ENCODE measurements at regions of chr19 and their contacts with region 1.

Region 1: GRCh38 chr19:50003810-50004419 is 21.3 kb downstream of the VRK3 start:
- DNase-seq: peak; percentile 14
- H3K4me3 Mint-ChIP-seq: peak overlapping the region; percentile 51
- H3K27ac Mint-ChIP-seq: peak overlapping the region; percentile 39
- H3K4me1 Mint-ChIP-seq: peaks cover 31% of the 10 kb centered on the region
- H3K27me3 Mint-ChIP-seq: no peaks in the 10 kb centered on the region

Region 2: DNA sequence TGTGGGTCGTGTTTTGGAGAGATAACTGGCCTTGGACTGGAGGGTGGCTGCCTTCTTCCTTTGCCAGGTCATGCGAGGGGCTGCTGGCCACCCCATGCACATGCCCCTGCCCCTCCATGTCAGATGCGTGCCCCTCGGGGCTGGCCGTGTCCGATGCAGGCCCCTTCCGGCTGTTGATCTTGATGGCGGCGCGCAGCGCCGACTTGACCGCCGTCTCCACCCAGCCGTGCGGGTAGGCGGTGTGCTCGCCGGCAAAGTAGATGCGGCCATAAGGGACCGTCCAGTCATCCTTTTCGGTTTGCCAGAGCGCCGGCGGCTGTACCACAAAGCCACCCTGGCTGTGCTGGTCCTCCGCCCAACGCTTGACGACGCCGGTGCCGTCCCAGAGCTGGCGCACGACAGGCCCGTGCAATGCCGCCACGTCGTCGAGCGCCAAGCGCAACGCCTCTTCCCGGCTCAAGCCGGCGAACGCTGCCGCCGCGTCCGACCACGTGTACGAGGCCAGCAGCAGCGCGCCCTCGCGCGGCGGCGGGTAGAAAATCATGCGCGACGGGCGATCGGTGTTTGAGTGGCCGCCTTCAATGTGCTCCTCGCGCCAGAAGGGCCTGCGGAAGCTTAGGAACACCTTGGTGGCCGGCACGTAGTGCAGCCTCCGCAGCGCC is 114.1 kb before region 1 on chr19:
- intact Hi-C with region 1: no loop called
- DNase-seq: peak; percentile 75
- H3K4me3 Mint-ChIP-seq: peak overlapping the region; percentile 73
- H3K27ac Mint-ChIP-seq: no peak overlapping the region
- H3K4me1 Mint-ChIP-seq: peaks cover 11% of the 10 kb centered on the region
- H3K27me3 Mint-ChIP-seq: no peaks in the 10 kb centered on the region

Region 3: GRCh38 chr19:49911381-49912145 is 92.4 kb before region 1 on chr19:
- intact Hi-C with region 1: no loop called
- DNase-seq: no peak
- H3K4me3 Mint-ChIP-seq: peak overlapping the region; percentile 59
- H3K27ac Mint-ChIP-seq: peak overlapping the region; percentile 88
- H3K4me1 Mint-ChIP-seq: peaks cover 41% of the 10 kb centered on the region
- H3K27me3 Mint-ChIP-seq: no peaks in the 10 kb centered on the region

Region 4: GRCh38 chr19:50025024-50025789 is 21.3 kb after region 1 on chr19 and contains the start of gene VRK3:
- intact Hi-C with region 1: loop called (anchors 2 kb)
- DNase-seq: peak; percentile 98
- H3K4me3 Mint-ChIP-seq: peak within 1 kb of the TSS; percentile 91
- H3K27ac Mint-ChIP-seq: peak within 1 kb of the TSS; percentile 96
- H3K4me1 Mint-ChIP-seq: peaks cover 32% of the 10 kb centered on the region
- H3K27me3 Mint-ChIP-seq: no peaks in the 10 kb centered on the region
- total RNA-seq, gene VRK3: 60.8 and 67.7 TPM in 2 replicates

Measured in activated T-helper 2 cell treated with anti-CD3 and anti-CD28 coated beads, Interferon-gamma antibody, Interleukin-2, Interleukin-4, amounts not matched to agents 10 μg/mL and 5 μg/mL and 100 μg/mL, durations not matched to agents 14 hours and 24 hours and 36 hours (primary cell).